ENCODE measurements at regions of chr4 and their contacts with region 1.

Region 1: DNA sequence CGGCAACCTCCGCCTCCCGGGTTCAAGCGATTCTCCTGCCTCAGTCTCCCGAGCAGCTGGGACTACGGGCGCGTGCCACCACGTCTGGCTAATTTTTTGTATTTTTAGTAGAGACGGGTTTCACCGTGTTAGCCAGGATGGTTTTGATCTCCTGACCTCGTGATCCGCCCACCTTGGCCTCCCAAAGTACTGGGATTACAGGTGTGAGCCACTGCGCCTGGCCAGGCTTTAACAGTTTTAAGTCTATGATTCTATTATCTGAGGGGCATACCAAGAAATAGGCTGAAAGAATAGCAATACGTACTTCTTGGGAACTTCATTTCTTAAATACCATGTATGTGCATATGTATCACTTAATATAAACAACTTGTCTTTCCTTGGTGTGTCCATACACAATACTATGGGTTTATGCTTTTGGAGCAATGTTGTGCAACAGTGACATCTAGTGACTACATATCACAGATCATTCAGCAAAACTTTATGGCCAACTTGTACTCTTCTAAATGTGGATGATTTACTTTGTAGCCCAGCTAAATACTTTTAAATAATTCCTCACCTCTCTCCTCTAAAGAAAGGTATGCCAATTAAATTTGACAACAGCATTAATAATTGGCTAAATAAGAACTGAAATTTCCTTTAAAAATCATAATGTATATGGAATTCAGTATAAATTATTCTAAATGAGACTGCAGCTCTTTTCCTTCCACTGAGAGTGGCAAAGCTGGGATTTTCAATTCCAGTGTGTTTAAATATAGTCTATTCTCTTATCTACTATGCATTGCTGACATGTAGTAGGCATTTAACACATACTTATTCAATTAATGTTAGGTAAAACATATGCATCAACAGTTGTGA is 10.4 kb downstream of the SLC9B1 start:
- DNase-seq: peak in 2 of 3 donors; percentile 19 to 69
- ATAC-seq: peak; percentile 77
- H3K4me3 ChIP-seq: no peak overlapping the region
- H3K4me1 ChIP-seq: peaks cover 16% of the 10 kb centered on the region
- CTCF ChIP-seq: peak; percentile 39

Region 2: DNA sequence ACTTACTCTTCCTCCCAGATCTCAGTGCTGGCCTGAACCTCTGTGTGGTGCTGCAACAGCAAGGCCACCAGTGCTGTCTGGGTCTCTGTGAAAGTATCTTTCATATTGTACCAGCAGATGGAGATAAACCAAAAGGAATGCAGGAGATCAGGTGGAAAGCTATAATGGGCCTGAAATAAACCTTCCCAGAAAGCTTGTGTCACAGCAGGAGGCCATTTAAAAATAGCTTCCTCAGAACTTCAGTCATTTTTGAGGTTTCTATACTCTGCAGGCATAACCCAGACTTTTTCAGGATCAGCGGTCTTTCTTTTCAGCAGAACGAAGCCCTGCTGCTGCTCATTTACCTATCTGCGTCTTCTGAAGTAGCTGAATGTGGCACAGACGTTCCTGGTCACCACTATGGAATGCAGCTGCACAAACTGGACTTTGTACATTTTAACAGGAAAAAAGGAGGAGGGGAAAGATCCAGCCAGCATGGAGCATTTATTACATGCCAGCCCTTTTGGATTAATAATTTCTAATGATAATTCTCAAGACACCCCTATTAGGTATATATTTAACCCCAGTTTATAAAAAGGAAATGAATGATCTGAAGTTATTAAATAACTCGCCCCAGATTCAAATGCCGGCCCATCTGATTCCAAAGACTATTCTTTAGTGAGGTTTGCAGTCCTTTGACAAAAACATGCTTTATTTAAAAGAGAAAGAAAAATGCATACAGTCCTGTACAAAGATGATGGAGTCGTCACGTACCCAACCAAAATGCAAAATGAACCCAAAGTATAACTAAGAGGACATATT is 388.2 kb before region 1 on chr4:
- intact Hi-C with region 1: loop called (anchors 5 to 10 kb)
- DNase-seq: peak in 1 of 3 donors; percentile 62
- ATAC-seq: peak; percentile 92
- H3K4me3 ChIP-seq: no peak overlapping the region
- H3K4me1 ChIP-seq: peaks cover 4% of the 10 kb centered on the region
- CTCF ChIP-seq: no peak

Region 3: GRCh38 chr4:102819588-102820365 is 189.3 kb before region 1 on chr4:
- intact Hi-C with region 1: loop called in 1 of 2 experiments (anchors 5 kb)
- DNase-seq: peak in 1 of 3 donors; percentile 20
- ATAC-seq: peak; percentile 60
- H3K4me3 ChIP-seq: no peak overlapping the region
- H3K4me1 ChIP-seq: peaks cover 65% of the 10 kb centered on the region
- CTCF ChIP-seq: no peak

Measured in mucosa of descending colon (tissue), 3 donors.